Activated CD8-positive, alpha-beta memory T cell treated with anti-CD3 and anti-CD28 coated beads, Interleukin-2, amount 10 ng/mL, durations not matched to agents 7 days and 5 days (primary cell): ENCODE measurements at regions of chr4 and their contacts with region 1.

Region 1: DNA sequence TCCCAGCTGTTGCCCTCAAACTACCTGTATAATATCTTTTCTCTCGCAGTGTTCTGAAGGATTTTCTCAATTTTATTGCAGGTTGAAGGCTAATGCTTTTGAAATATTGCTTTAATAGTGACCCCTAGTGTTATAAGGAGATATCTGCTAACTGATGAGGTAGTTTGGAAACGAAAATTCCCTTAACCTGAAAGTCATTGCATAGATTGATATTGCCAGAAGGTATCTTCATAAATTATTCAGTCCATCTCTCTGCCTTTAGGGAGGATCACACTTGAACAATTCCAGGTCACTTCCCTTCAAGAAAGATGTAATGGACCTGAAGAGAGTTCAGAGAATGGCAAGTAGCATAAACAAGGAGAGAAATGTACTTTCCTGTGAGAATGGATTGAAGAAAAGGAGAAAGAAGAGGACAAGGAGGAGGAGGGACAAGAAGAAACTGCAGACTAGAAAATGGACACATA is 44.1 kb downstream of the TIGD4 start:
- DNase-seq: no peak
- ATAC-seq: peak; percentile 60
- H3K4me3 Mint-ChIP-seq: no peak overlapping the region
- H3K27ac Mint-ChIP-seq: no peak overlapping the region
- H3K4me1 Mint-ChIP-seq: peaks cover 4% of the 10 kb centered on the region
- H3K27me3 Mint-ChIP-seq: peaks cover 6% of the 10 kb centered on the region

Region 2: DNA sequence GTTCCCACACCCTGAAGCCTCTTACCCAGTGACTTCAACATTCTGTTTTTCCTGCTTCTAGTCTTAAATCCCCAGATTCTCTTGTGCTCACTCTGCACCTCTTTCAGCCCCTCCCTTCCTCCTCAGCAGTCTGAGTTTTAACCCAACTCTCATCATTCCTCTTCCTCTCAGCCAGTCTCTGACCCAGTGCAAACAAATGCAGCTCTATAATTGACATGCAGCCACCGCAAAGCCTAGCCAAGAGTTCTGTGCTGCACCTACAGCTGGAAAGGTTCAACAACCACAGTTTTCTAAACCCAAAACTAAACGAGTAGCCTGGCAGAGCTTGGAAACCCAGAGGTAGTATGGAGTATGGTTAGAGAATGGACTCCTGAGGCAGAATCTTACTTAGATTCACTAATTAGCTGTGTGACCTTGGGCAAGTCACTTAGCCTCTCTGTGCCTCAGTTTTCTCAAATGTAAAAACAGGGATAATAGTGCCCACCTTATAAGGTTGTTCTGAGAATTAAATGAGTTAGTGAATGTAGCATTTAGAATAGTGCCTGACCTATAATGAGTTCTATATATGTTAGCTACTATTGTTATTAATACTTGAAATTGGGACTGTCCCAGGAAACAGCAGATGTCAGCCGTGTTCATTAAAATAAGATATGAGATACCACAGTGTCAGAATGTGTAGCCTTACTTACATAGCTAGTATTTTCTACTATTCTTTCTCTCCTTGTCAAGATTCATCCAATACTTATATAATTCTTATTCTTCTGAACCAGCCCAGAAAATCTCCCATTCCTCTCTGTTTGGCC is 59.2 kb before region 1 on chr4:
- CTCF ChIA-PET with region 1: interaction called, 12 read pairs
- DNase-seq: no peak
- ATAC-seq: no peak
- H3K4me3 Mint-ChIP-seq: no peak overlapping the region
- H3K27ac Mint-ChIP-seq: no peak overlapping the region
- H3K4me1 Mint-ChIP-seq: peaks cover 49% of the 10 kb centered on the region
- H3K27me3 Mint-ChIP-seq: no peaks in the 10 kb centered on the region

Region 3: GRCh38 chr4:152719801-152720556 is 15.4 kb before region 1 on chr4:
- CTCF ChIA-PET with region 1: no interaction called
- DNase-seq: no peak
- ATAC-seq: no peak
- H3K4me3 Mint-ChIP-seq: no peak overlapping the region
- H3K27ac Mint-ChIP-seq: no peak overlapping the region
- H3K4me1 Mint-ChIP-seq: peaks cover 2% of the 10 kb centered on the region
- H3K27me3 Mint-ChIP-seq: peaks cover 3% of the 10 kb centered on the region

Region 4: DNA sequence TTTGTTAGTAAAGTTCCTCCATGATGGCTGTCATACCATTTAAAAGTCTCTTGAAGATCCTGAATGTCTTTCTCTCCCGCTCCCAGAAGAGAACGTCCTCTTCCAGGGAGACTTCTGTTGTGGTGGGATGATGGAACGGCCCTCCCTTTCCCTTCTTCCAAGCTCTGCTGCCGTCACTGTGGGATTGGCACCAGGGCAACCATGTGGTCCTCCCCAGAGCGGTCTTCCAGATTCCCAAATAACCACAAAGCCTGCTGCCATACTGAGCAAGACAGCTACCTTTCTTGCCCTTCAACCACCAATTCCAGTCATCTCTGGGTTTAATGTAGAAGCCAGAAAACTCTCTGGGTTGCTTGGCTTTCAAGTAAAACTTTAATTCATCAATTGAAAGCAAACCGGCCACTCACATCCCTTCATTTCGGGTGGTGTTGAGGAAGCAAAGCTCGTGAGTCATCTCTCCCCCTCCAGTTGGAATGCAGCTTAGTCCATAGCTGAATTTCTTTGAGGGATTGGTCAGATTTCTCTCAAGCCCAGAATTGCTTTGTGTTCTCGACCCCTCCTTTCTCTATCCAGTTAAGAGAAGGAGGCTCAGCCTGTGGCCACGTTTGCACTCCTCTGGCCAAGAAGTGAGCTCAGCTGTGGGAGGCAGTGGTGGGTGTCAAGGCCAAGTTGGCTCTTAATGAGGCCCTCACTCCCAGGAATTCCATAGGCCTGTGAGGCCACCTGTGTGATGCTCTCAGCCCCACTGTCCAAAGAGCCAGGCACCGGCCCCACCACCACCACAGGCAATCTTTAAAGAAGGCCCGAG is 237.6 kb after region 1 on chr4:
- CTCF ChIA-PET with region 1: no interaction called
- DNase-seq: no peak
- ATAC-seq: no peak
- H3K4me3 Mint-ChIP-seq: no peak overlapping the region
- H3K27ac Mint-ChIP-seq: no peak overlapping the region
- H3K4me1 Mint-ChIP-seq: no peaks in the 10 kb centered on the region
- H3K27me3 Mint-ChIP-seq: peaks cover 2% of the 10 kb centered on the region